Naive thymus-derived CD4-positive, alpha-beta T cell (primary cell): ENCODE measurements at regions of chr12 and their contacts with region 1.

Region 1: GRCh38 chr12:76621582-76622024 is 62.0 kb upstream of the OSBPL8 start:
- DNase-seq: peak; percentile 29 to 76 (median 58)
- ATAC-seq: peak; percentile 95
- H3K4me3 ChIP-seq: no peak overlapping the region
- H3K4me3 Mint-ChIP-seq: no peak overlapping the region
- H3K27ac ChIP-seq: no peak overlapping the region
- H3K27ac Mint-ChIP-seq: peak overlapping the region in 2 of 9 donors; percentile 1 to 44
- H3K4me1 ChIP-seq: no peaks in the 10 kb centered on the region
- H3K4me1 Mint-ChIP-seq: peaks cover 0 to 6% (median 5%) of the 10 kb centered on the region in 7 donors
- H3K27me3 ChIP-seq: no peaks in the 10 kb centered on the region
- H3K27me3 Mint-ChIP-seq: peaks cover 0 to 12% (median 3%) of the 10 kb centered on the region in 5 donors

Region 2: GRCh38 chr12:75239987-75240386 is 1381.6 kb before region 1 on chr12:
- CTCF ChIA-PET with region 1: no interaction called
- POLR2A ChIA-PET with region 1: no interaction called
- intact Hi-C with region 1: no loop called
- DNase-seq: no peak
- ATAC-seq: no peak
- H3K4me3 ChIP-seq: no peak overlapping the region
- H3K4me3 Mint-ChIP-seq: no peak overlapping the region
- H3K27ac ChIP-seq: no peak overlapping the region
- H3K27ac Mint-ChIP-seq: no peak overlapping the region
- H3K4me1 ChIP-seq: no peaks in the 10 kb centered on the region
- H3K4me1 Mint-ChIP-seq: no peaks in the 10 kb centered on the region
- H3K27me3 ChIP-seq: no peaks in the 10 kb centered on the region
- H3K27me3 Mint-ChIP-seq: peaks cover 0 to 14% (median 10%) of the 10 kb centered on the region in 5 donors

Region 3: DNA sequence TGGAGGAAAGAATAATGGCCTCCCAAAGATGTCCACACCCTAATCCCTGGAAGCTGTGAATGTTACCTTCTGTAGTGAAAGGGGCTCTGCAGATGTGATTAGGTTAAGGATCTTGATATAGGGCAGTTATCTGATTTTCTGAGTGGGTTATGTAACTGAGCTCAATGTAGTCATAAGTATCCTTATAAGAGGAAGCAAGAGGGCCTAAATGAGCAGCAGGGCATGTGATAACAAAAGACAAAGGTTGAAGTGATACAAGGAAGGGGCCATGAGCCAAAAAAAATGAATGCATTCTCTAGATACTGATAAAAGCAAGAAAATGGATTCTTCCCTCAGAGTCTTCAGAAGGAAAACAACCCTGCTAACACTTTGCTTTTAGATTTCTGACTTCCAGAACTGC is 140.8 kb before region 1 on chr12:
- CTCF ChIA-PET with region 1: no interaction called
- POLR2A ChIA-PET with region 1: no interaction called
- intact Hi-C with region 1: no loop called
- DNase-seq: no peak
- ATAC-seq: peak; percentile 24
- H3K4me3 ChIP-seq: no peak overlapping the region
- H3K4me3 Mint-ChIP-seq: no peak overlapping the region
- H3K27ac ChIP-seq: no peak overlapping the region
- H3K27ac Mint-ChIP-seq: peak overlapping the region in 2 of 9 donors; percentile 4 to 51
- H3K4me1 ChIP-seq: no peaks in the 10 kb centered on the region
- H3K4me1 Mint-ChIP-seq: peaks cover 9 to 44% (median 35%) of the 10 kb centered on the region in 7 donors
- H3K27me3 ChIP-seq: no peaks in the 10 kb centered on the region
- H3K27me3 Mint-ChIP-seq: no peaks in the 10 kb centered on the region

Region 4: DNA sequence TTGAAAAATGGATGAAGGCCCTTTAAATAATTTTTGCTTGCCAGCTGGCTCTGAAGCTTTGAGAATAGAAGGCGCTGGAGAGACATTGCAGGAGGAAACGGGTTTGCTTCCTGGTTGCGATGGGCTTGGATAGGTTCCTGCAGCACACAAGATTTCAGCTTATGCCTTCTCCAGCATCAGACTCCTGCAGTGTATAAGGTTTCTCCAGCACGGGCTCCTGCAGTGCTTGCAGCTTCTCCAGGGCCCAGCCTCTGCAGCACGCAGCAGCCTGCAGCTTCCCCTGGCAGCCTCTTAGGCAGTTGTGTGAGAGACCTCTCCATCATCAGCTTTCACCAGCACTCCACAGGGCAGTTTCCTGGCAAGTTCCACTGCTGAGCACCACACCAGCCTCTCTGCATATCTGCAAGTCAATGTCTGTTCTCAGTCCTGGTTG is 63.7 kb after region 1 on chr12:
- CTCF ChIA-PET with region 1: no interaction called
- POLR2A ChIA-PET with region 1: no interaction called
- intact Hi-C with region 1: loop called in 1 of 2 experiments (anchors 10 kb)
- DNase-seq: no peak
- ATAC-seq: peak; percentile 32
- H3K4me3 ChIP-seq: no peak overlapping the region
- H3K4me3 Mint-ChIP-seq: no peak overlapping the region
- H3K27ac ChIP-seq: no peak overlapping the region
- H3K27ac Mint-ChIP-seq: no peak overlapping the region
- H3K4me1 ChIP-seq: no peaks in the 10 kb centered on the region
- H3K4me1 Mint-ChIP-seq: peaks cover 0 to 9% (median 4%) of the 10 kb centered on the region in 7 donors
- H3K27me3 ChIP-seq: no peaks in the 10 kb centered on the region
- H3K27me3 Mint-ChIP-seq: peaks cover 0 to 8% (median 0%) of the 10 kb centered on the region in 5 donors

Region 5: DNA sequence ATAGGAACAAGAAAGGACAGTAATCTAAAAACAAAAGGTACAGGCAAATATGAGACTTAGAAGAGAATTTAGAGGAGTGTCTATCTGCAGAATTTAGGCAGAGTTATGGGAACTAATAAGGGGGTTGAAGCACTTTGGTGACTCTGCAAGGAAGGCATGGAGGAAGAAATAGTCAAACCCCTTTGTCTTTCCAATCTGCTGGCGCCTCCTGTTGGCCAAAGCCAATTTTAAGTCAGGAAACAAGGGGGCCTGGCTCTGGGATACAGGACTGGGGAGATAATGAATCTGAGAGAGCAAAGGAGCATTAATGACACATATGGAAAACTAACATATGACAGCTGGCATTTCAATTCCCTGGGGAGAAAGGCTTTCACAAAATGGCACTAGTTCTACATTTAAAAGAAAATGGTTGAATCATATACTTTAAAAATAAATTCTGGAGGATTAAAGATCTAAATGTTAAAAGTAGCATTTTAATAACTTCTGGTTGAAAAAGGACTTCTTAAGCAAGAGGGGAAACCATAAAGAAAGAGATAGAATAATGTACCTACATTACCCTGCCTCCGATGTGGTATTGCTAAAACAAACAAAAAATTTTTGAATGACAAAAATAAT is 305.7 kb after region 1 on chr12:
- CTCF ChIA-PET with region 1: interaction called, 4 read pairs
- POLR2A ChIA-PET with region 1: no interaction called
- intact Hi-C with region 1: loop called (anchors 1 kb)
- DNase-seq: peak in 4 of 9 donors; percentile 9 to 18 (median 14)
- ATAC-seq: no peak
- H3K4me3 ChIP-seq: no peak overlapping the region
- H3K4me3 Mint-ChIP-seq: no peak overlapping the region
- H3K27ac ChIP-seq: no peak overlapping the region
- H3K27ac Mint-ChIP-seq: no peak overlapping the region
- H3K4me1 ChIP-seq: no peaks in the 10 kb centered on the region
- H3K4me1 Mint-ChIP-seq: peaks cover 0 to 1% (median 0%) of the 10 kb centered on the region in 7 donors
- H3K27me3 ChIP-seq: no peaks in the 10 kb centered on the region
- H3K27me3 Mint-ChIP-seq: peaks cover 8 to 28% (median 25%) of the 10 kb centered on the region in 5 donors

Region 6: DNA sequence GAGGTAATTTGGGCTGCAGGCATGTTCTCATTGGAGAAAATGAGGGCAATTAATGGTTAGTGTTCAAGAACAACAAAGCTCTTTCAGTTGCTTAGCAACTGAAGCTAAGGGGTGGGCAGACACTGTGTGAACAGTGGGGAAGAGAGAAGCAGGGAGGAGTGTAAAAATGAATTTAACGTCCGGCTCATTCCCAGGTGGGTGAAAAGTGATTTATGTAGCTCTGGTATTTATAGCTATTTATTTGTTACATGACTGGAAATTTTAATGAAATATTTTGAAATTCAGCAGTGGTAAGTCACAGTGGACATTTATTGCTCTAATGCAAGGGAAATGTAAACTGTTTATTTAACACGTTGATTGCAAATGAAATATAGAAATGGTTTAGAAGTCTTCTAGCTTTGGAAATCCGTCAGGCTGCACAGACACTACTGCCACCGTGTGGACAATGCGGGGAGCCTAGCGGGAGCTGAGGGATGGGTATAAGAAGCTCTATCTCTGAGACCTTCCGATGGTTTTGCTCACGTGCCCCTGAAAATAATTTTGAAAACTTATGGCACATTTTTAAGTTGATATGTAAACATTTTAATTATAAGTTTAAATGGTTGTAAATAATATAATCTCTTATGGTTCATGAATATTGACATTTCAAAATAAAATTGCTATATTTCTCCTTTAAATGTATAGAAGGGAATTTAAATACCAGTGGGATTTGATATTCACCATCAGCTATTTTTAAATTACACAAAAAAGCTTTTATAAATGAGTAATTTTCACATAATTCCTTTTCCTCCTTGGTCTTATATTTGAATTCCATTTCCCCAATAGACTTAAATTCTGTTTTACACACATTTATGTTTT is 389.3 kb after region 1 on chr12:
- CTCF ChIA-PET with region 1: interaction called, 22 read pairs
- POLR2A ChIA-PET with region 1: no interaction called
- intact Hi-C with region 1: loop called (anchors 1 kb)
- DNase-seq: peak; percentile 19 to 65 (median 45)
- ATAC-seq: peak; percentile 84
- H3K4me3 ChIP-seq: no peak overlapping the region
- H3K4me3 Mint-ChIP-seq: peak overlapping the region in 2 of 10 donors; percentile 8 to 17
- H3K27ac ChIP-seq: no peak overlapping the region
- H3K27ac Mint-ChIP-seq: no peak overlapping the region
- H3K4me1 ChIP-seq: no peaks in the 10 kb centered on the region
- H3K4me1 Mint-ChIP-seq: peaks cover 0 to 6% (median 5%) of the 10 kb centered on the region in 7 donors
- H3K27me3 ChIP-seq: no peaks in the 10 kb centered on the region
- H3K27me3 Mint-ChIP-seq: peaks cover 9 to 20% (median 18%) of the 10 kb centered on the region in 5 donors